Calu3 (cell line): ENCODE measurements at regions of chr11 and their contacts with region 1.

Region 1: GRCh38 chr11:96242971-96243647 is 99.9 kb downstream of the MAML2 start:
- DNase-seq: peak; percentile 91
- H3K4me3 Mint-ChIP-seq: peak overlapping the region; percentile 70
- H3K27ac Mint-ChIP-seq: peak overlapping the region; percentile 75
- H3K4me1 Mint-ChIP-seq: peaks cover 37% of the 10 kb centered on the region
- H3K27me3 Mint-ChIP-seq: no peaks in the 10 kb centered on the region
- CTCF ChIP-seq: no peak

Region 2: DNA sequence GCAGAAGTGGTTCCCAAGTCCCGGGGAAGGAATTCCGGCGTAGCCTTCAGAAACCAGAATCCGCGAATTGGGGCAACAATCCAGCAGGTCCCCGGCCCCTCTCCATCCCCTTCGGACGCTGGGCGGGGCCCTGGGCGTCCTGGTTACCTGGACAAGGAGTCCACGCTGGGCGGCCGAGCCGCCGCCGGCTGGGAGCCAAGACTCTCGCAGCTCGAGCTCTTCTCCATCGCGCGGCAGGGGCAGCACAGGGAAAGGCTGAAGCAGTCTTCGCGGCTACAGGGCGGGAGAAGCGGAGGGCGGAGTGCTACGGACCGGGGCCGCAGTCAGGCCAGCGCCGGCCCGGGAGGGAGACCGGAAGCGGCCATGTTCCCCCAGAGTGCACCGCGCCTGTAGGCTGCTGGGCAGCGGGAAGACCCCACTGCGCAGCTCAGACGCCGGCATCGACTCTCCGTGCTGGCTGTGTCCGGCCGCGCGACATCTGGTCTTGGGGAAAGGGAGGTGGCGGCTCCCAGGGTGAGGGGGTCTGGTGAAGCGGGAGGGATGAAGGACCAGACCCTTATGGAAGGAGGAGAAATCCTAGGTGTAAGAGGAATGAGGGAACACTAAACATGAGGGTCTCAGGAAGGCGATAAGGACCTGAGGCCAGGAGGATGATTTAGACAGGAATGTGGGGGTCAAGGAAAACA is 319.2 kb before region 1 on chr11 and contains the start of gene MTMR2:
- CTCF ChIA-PET with region 1: no interaction called
- intact Hi-C with region 1: loop called (anchors 5 kb)
- DNase-seq: peak; percentile 61
- H3K4me3 Mint-ChIP-seq: peak within 1 kb of the TSS; percentile 89
- H3K27ac Mint-ChIP-seq: peak within 1 kb of the TSS; percentile 86
- H3K4me1 Mint-ChIP-seq: peaks cover 13% of the 10 kb centered on the region
- H3K27me3 Mint-ChIP-seq: no peaks in the 10 kb centered on the region
- CTCF ChIP-seq: no peak
- total RNA-seq, gene MTMR2: 16.6 and 17.4 TPM in 2 replicates

Region 3: GRCh38 chr11:96054870-96055705 is 188.0 kb before region 1 on chr11:
- CTCF ChIA-PET with region 1: no interaction called
- intact Hi-C with region 1: loop called (anchors 2 kb)
- DNase-seq: no peak
- H3K4me3 Mint-ChIP-seq: no peak overlapping the region
- H3K27ac Mint-ChIP-seq: no peak overlapping the region
- H3K4me1 Mint-ChIP-seq: peaks cover 44% of the 10 kb centered on the region
- H3K27me3 Mint-ChIP-seq: no peaks in the 10 kb centered on the region
- CTCF ChIP-seq: no peak

Region 4: GRCh38 chr11:96112201-96113128 is 130.6 kb before region 1 on chr11:
- CTCF ChIA-PET with region 1: no interaction called
- intact Hi-C with region 1: no loop called
- DNase-seq: no peak
- H3K4me3 Mint-ChIP-seq: no peak overlapping the region
- H3K27ac Mint-ChIP-seq: no peak overlapping the region
- H3K4me1 Mint-ChIP-seq: peaks cover 27% of the 10 kb centered on the region
- H3K27me3 Mint-ChIP-seq: no peaks in the 10 kb centered on the region
- CTCF ChIP-seq: no peak

Region 5: DNA sequence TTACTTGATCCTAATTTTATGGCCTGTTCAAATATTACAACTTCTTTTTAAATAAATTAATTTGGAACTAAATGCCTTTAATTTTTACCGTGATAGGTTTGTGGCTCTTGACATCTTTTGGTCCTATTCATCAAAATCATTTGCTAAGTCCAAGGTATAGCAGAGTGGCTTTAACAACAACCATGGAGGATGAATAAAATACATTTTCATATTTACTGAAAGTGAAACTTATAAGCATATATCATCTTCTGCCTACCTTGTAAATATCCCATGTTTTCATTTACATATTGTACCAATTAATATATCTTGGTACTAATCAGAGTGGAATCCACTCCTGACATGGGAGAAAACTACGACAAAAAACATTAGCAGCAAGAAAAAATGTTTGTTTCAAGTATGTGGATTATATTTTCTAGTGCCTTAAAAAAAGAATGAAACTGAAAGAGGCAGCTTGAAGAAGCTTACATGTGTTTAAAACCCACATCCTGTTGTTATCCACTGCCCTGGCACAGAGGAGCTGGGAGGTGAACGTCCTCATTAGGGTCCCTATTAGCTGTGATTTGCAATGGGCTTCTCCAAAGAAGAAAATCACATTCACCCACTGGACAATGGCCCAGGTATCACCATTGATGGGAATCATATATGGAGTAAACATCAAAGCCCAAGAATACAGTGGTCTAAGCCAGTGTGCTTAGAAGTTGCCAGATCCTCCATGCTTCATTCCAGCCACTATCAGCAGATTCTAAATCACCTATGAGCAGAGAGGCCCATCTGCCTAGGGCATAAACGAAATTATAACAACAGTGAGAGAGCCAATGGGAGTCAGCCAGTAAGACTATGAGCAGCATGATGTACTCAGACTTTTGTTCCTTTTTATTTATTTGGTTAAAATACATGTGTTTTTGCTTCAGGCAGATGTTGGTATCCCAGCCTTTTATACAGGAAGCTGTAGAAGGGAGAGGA is 15.1 kb after region 1 on chr11:
- CTCF ChIA-PET with region 1: no interaction called
- intact Hi-C with region 1: no loop called
- DNase-seq: no peak
- H3K4me3 Mint-ChIP-seq: no peak overlapping the region
- H3K27ac Mint-ChIP-seq: peak overlapping the region; percentile 64
- H3K4me1 Mint-ChIP-seq: peaks cover 57% of the 10 kb centered on the region
- H3K27me3 Mint-ChIP-seq: no peaks in the 10 kb centered on the region
- CTCF ChIP-seq: no peak

Region 6: DNA sequence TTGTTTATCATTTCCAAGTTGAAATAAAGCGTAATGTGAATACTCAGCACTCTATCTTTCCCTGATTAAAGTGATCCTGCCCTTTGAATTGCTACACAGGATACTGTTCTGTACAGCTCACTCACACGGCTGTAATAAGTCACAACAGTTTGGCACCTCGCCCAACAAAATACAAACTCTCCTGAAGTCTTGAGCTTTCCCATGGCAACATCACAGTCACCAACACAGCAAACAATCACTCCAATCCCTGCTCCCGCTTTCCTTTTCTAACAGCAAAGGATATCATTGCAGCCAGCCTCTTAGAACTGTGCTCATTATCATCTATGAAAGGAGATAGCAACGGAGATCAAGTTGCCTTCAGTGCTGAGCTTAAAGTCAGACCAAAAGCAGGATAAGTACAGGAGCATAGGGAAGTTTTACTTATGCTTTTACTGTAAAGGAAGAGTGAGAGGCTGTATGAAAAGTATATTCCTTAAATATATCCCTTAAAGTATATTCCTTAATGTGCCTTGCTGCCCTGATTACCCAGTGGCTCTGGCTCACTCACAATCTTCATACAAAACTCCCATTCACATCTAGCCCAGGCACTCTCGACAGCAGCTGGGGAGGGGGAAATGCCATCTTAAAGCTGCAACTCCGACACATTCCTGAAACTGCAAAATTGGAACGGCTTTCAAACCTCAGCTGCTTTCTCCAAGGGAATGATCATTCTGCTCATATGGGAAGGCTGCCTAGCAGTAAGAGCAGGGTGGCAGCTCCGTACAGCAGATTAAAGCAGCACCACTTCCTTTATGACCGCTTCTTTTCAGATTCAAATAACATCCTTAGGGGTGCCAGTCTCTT is 64.0 kb after region 1 on chr11:
- CTCF ChIA-PET with region 1: no interaction called
- intact Hi-C with region 1: loop called (anchors 10 kb)
- DNase-seq: peak; percentile 82
- H3K4me3 Mint-ChIP-seq: peak overlapping the region; percentile 60
- H3K27ac Mint-ChIP-seq: peak overlapping the region; percentile 98
- H3K4me1 Mint-ChIP-seq: peaks cover 61% of the 10 kb centered on the region
- H3K27me3 Mint-ChIP-seq: no peaks in the 10 kb centered on the region
- CTCF ChIP-seq: no peak